ENCODE measurements at regions of chr2 and their contacts with region 1.

Region 1: DNA sequence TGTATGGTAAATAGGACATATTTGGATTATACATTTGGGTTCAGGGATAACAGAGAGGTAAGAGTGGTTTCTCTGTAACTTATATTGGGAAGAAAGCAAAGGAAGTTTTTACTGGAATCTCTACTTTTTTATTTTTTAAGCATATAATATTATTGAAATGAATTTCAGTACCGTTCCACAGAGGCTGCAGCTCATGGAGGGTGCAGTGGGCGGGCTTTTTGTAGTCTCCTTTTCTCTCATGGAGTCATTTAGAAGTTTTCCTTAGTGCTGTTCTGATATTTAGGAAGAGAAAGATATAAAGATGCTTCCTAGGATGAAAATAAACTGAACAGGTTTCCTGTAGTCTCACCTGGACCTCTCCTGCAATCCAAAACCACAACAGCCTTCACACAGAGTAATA is 1153.3 kb upstream of the TMEFF2 start:
- DNase-seq: no peak
- ATAC-seq: no peak
- H3K4me3 ChIP-seq: peak overlapping the region in 9 of 12 donors; percentile 31 to 57 (median 46)
- H3K27ac ChIP-seq: no peak overlapping the region
- H3K4me1 ChIP-seq: no peaks in the 10 kb centered on the region
- H3K27me3 ChIP-seq: no peaks in the 10 kb centered on the region
- CTCF ChIP-seq: no peak
- POLR2A ChIP-seq: no peak

Region 2: DNA sequence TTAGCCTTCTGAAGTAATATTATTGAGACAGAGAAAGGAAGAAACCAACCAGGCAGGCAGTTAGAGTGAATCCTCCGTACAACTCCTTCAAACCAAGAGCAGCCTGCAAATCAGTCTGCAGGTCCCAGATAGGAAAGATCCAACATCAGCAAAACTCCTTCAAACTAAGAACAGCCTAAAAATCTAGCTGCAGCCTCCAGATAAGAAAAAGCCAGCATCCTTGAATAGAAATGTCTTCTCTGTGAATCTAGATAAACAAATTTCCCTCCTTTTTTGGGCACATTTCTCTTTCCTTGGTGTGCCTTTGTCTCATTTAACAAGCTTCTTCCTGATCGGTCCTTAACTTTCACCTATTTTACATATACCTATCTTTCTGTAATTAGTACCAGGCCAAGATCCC is 148.7 kb before region 1 on chr2:
- intact Hi-C with region 1: no loop called
- DNase-seq: no peak
- ATAC-seq: no peak
- H3K4me3 ChIP-seq: no peak overlapping the region
- H3K27ac ChIP-seq: no peak overlapping the region
- H3K4me1 ChIP-seq: no peaks in the 10 kb centered on the region
- H3K27me3 ChIP-seq: no peaks in the 10 kb centered on the region
- CTCF ChIP-seq: no peak
- POLR2A ChIP-seq: no peak

Region 3: DNA sequence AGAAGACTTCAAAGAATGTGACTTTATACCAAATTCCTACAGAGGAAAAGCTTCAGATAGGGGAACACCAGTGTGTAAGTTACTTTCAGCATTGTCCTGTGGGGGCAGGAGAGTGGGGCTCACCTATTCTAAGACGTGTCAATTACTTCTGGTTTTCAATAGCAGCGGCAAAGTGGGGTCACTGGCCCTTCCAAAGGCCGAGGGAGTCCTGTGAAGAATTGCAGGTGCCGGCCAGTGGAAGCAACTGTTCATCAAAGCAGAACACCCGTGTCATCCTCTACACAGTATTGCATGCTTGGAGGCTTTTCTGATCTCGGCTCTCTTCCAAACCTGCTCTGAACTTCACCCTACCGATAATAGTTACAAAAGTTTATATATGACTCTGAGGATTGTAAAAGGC is 23.1 kb after region 1 on chr2:
- intact Hi-C with region 1: loop called in 1 of 10 experiments (anchors 2 kb)
- DNase-seq: no peak
- ATAC-seq: no peak
- H3K4me3 ChIP-seq: no peak overlapping the region
- H3K27ac ChIP-seq: no peak overlapping the region
- H3K4me1 ChIP-seq: no peaks in the 10 kb centered on the region
- H3K27me3 ChIP-seq: no peaks in the 10 kb centered on the region
- CTCF ChIP-seq: no peak
- POLR2A ChIP-seq: no peak